A549 (cell line): ENCODE measurements at regions of chr6 and their contacts with region 1.

Region 1: DNA sequence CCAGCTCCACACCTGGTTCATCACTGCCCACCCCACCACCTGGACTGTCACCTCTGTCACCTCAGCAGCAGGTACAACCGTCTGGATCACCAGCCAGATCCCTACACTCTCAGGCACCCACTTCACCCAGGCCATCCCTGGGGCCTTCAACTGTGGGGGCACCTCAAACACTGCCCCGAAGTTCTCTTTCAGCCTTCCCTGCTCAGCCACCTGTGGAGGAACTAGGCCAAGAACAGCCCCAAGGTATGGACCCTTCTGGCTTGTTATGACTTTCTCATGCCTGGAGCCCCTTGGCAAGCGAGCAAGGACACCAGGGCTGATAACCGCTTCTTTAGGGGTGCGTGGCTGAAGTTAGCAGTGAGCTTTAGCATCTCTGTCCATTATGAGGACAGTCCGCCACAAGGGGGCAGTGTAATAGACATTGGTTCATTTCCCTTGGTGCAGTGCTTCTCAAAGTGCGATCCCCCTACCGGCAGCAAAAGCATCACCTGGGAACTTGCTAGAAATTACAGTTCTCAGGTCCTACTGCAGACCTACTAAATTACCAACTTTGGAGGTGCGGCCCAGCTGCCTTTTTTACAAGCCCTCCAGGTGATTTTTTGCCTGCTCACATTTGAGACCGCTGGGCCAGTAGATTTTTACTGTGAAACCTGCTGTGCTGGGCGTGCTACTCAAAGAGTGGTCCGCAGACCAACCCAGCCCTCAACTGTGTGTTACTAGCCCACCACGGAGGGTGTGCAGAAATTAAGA is 32.5 kb downstream of the PNPLA1 start:
- DNase-seq: peak; percentile 64 to 90
- ATAC-seq: peak; percentile 95 to 99
- H3K4me3 ChIP-seq: no peak overlapping the region
- H3K27ac ChIP-seq: no peak overlapping the region
- H3K4me1 ChIP-seq: 0 out of 3 replicates have a peak, but pooled peaks cover 2% of the 10 kb centered on the region
- CTCF ChIP-seq: peak; percentile 85
- EP300 ChIP-seq: no peak
- POLR2A ChIP-seq: no peak
- RAD21 ChIP-seq: peak; percentile 57 to 62

Region 2: DNA sequence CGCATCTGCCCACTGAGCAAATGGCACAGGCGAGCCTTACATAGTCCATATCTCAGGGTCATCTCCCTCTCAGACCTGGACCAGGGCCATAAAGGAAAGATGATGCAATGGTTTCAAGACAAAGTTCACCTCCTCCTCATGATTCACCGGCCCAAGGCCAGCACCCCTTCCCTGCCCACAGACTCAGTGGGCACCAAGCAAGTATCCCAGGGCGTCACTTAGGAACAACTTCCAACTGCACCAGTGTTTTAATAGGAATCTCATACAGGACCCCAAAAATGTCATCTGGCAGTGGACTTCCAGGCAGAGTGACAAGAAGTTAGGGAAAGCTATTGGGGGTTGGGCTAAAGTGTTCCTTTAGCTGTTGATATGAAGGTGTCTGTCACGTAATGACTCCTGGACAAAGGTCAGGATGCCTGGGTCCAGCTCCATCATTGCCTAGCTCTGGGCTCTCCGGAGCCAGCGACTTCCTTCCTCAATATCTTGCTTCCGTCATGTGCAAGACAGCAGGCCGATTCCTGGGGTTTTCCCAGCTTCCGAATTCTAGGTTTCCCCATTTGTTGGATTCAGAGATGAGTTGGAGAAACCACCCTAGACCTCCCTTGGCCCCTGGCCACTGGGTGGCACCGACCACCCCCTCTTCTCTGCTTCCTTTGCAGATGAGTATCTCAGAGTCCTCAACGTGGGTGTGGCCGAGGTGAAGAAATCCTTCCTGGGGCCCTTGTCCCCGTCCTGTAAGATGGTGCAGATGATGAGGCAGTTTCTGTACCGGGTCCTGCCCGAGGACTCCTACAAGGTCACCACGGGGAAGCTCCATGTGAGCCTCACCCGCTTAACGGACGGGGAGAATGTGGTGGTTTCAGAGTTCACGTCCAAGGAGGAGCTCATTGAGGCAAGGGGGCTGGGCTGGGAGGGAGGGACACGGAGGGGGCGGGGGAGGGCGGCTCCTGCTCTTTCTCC is 11.5 kb before region 1 on chr6:
- CTCF ChIA-PET with region 1: interaction called, 73 read pairs
- POLR2A ChIA-PET with region 1: no interaction called
- DNase-seq: peak; percentile 18 to 33
- ATAC-seq: peak; percentile 33 to 60; a peak in 2 of 6 replicates
- H3K4me3 ChIP-seq: no peak overlapping the region
- H3K27ac ChIP-seq: peak overlapping the region; percentile 61 to 78
- H3K4me1 ChIP-seq: peaks cover 26% of the 10 kb centered on the region
- CTCF ChIP-seq: no peak
- EP300 ChIP-seq: no peak
- POLR2A ChIP-seq: no peak
- RAD21 ChIP-seq: no peak

Region 3: GRCh38 chr6:36318690-36319435 is 16.5 kb after region 1 on chr6:
- CTCF ChIA-PET with region 1: interaction called, 11 read pairs
- POLR2A ChIA-PET with region 1: no interaction called
- DNase-seq: no peak
- ATAC-seq: no peak
- H3K4me3 ChIP-seq: no peak overlapping the region
- H3K27ac ChIP-seq: no peak overlapping the region
- H3K4me1 ChIP-seq: no peaks in the 10 kb centered on the region
- CTCF ChIP-seq: no peak
- EP300 ChIP-seq: no peak
- POLR2A ChIP-seq: no peak
- RAD21 ChIP-seq: no peak

Region 4: DNA sequence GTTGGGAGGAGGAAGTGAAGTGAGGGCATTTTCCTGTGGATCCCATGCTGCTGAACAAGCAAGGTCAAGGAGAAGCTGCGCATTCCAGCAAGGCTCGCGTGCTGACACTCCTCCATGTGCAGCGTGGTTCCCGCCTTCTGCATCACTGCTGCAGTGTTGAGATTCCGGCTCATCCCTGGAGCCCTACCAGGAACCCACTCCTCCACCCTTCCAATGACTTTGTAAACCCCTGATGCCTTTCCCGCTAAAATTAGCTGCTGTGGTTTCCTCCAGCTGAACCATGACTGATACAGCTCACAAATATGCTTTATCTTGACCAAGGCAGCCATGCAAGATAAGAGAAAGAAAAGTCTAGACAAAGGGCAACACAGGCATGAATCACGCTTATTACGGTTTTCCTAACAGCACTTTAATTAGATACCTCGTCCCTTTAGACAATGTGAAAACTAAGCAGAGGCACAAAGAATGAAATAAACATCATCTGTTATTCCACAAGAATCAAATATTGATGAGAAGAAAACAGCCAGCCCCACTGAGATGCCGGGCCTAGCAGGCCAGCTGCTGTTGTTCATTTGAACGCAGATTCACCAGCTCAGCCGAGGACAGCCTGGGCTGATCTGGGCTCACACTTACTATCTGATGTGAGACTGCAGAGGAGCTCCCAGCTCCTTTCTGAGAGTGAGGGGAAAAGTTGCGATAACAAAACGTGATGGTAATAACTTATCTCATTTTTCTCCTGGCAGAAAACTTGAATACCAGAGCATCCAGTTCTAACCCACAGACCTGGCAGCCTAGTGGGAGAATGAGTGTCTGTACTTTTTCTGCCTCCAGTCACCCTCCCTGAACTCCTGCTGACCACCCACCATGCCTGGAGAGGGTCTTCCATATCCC is 48.5 kb after region 1 on chr6:
- CTCF ChIA-PET with region 1: interaction called, 10 read pairs
- POLR2A ChIA-PET with region 1: no interaction called
- DNase-seq: no peak
- ATAC-seq: no peak
- H3K4me3 ChIP-seq: no peak overlapping the region
- H3K27ac ChIP-seq: no peak overlapping the region
- H3K4me1 ChIP-seq: no peaks in the 10 kb centered on the region
- CTCF ChIP-seq: no peak
- EP300 ChIP-seq: no peak
- POLR2A ChIP-seq: no peak
- RAD21 ChIP-seq: no peak